AG04450 (cell line): ENCODE measurements at regions of chr20 and their contacts with region 1.

Region 1: DNA sequence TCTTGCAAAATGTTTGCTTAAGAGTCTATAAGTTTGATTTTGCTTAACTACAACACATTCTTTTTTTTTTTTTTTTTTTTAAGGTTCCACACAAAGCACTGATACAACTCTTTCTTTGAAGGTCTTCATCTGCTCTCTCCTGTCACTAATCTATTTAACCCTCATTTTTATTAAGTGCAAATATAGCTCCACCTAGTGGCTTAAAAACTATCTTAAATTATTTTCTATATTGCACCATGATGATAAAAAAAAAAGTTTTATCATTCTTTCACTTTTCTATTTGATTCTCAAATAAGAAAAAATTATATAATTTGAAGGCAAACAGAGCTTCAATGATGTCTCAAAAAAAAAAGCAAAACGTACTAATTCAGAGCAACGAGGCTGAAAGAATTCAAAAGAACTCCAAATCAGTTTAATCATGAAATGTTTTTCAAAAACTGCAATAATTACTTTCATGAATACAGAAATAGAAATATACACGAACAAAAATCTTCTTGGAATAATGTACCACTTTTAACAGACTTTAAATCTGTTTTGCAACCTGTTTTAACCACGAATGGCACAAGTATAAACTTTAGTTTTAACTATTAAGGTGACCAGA is 12.8 kb downstream of the ESF1 start:
- DNase-seq: no peak
- H3K4me3 ChIP-seq: no peak overlapping the region
- H3K27ac ChIP-seq: no peak overlapping the region
- H3K27me3 ChIP-seq: no peaks in the 10 kb centered on the region
- CTCF ChIP-seq: peak; percentile 50

Region 2: DNA sequence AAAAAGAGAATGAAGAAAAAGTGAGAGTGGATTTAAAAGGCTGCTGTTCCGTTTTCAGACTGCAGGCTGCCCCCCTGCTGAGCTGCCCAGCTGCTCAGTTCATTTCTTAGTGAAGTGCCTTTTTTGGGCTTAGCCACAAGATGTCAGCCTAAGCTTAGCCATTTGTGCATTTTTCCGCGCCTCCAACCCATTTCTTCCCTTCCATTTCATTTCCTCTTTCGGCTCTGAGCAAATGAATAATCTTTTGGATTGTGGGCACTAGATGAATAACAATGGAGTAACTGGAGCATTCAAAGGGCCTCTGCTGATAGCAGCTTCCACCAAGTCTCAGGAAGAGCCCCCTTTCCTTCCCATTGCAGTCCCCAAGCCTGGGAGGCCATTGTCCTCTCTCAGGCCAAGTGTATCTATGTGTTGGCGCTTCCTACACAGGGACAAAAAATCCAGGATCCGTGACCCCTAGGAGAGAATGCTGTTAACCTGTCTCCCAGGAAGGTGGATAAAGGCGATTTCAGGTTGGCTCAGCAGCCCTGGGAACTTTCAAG is 846.7 kb before region 1 on chr20:
- CTCF ChIA-PET with region 1: interaction called, 15 read pairs
- POLR2A ChIA-PET with region 1: no interaction called
- DNase-seq: peak; percentile 77
- H3K4me3 ChIP-seq: no peak overlapping the region
- H3K27ac ChIP-seq: no peak overlapping the region
- H3K27me3 ChIP-seq: peaks cover 18% of the 10 kb centered on the region
- CTCF ChIP-seq: peak; percentile 99

Region 3: GRCh38 chr20:13119583-13119982 is 652.4 kb before region 1 on chr20:
- CTCF ChIA-PET with region 1: interaction called, 35 read pairs
- POLR2A ChIA-PET with region 1: no interaction called
- DNase-seq: peak; percentile 7
- H3K4me3 ChIP-seq: no peak overlapping the region
- H3K27ac ChIP-seq: no peak overlapping the region
- H3K27me3 ChIP-seq: peaks cover 3% of the 10 kb centered on the region
- CTCF ChIP-seq: peak; percentile 93

Region 4: GRCh38 chr20:13397300-13397724 is 374.6 kb before region 1 on chr20:
- CTCF ChIA-PET with region 1: interaction called, 12 read pairs
- POLR2A ChIA-PET with region 1: no interaction called
- DNase-seq: no peak
- H3K4me3 ChIP-seq: no peak overlapping the region
- H3K27ac ChIP-seq: no peak overlapping the region
- H3K27me3 ChIP-seq: no peaks in the 10 kb centered on the region
- CTCF ChIP-seq: no peak

Region 5: GRCh38 chr20:13694420-13695150 is 77.4 kb before region 1 on chr20:
- CTCF ChIA-PET with region 1: no interaction called
- POLR2A ChIA-PET with region 1: no interaction called
- DNase-seq: no peak
- H3K4me3 ChIP-seq: no peak overlapping the region
- H3K27ac ChIP-seq: no peak overlapping the region
- H3K27me3 ChIP-seq: no peaks in the 10 kb centered on the region
- CTCF ChIP-seq: no peak

Region 6: GRCh38 chr20:13736436-13737191 is 35.3 kb before region 1 on chr20:
- CTCF ChIA-PET with region 1: interaction called, 10 read pairs
- POLR2A ChIA-PET with region 1: interaction called, 4 read pairs
- DNase-seq: peak; percentile 32
- H3K4me3 ChIP-seq: no peak overlapping the region
- H3K27ac ChIP-seq: no peak overlapping the region
- H3K27me3 ChIP-seq: no peaks in the 10 kb centered on the region
- CTCF ChIP-seq: no peak

Region 7: GRCh38 chr20:13784893-13785715 is 13.2 kb after region 1 on chr20 and contains the starts of genes ESF1 and NDUFAF5:
- CTCF ChIA-PET with region 1: interaction called, 58 read pairs
- POLR2A ChIA-PET with region 1: no interaction called
- DNase-seq: peak; percentile 94
- H3K4me3 ChIP-seq: peak within 1 kb of the TSS; percentile 90
- H3K27ac ChIP-seq: peak within 1 kb of the TSS; percentile 62
- H3K27me3 ChIP-seq: no peaks in the 10 kb centered on the region
- CTCF ChIP-seq: no peak
- polyA plus RNA-seq, gene ESF1: 3.8 and 6.2 TPM in 2 replicates
- polyA plus RNA-seq, gene NDUFAF5: 18.4 and 24.1 TPM in 2 replicates

Region 8: GRCh38 chr20:13857304-13857703 is 85.4 kb after region 1 on chr20:
- CTCF ChIA-PET with region 1: no interaction called
- POLR2A ChIA-PET with region 1: no interaction called
- DNase-seq: no peak
- H3K4me3 ChIP-seq: no peak overlapping the region
- H3K27ac ChIP-seq: no peak overlapping the region
- H3K27me3 ChIP-seq: no peaks in the 10 kb centered on the region
- CTCF ChIP-seq: no peak